HEK293T (cell line): ENCODE measurements at regions of chr10 and their contacts with region 1.

Region 1: GRCh38 chr10:60778214-60779029 is at the start of gene CDK1:
- DNase-seq: peak; percentile 95

Region 2: DNA sequence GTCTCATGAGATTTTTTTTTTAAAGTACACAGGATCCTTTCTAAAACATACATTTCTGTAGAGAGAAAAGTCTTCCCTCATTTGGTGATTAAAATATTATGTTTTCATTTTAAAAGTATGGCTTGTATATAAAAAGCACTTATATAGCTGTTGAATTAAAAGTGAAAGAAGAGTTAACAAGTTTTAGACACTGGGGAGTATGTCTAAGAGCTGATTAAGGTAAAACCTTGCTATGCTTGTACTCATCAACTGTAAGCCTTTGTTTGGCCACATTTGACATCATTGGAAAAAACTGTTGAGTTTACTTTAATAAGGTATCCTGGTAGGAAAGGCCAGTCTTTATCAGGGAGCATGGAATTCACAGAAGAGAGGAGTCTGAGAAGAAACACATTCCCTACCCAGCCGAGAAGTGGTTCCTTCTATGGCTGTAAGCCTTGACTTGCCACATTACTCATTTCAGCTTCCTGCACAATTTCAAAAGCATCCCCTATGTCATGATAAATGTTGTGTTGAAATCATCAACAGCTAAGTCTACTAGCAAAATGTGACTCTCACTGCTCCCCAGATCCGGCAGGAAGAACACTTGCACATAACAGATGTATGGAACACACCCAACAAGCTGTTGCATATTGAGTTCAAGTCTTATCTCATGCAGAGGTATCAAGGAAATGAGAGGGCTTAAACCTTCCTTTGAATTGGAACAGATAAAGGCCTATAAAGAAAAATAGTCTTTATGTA is 171.9 kb before region 1 on chr10:
- CTCF ChIA-PET with region 1: no interaction called
- POLR2A ChIA-PET with region 1: no interaction called
- DNase-seq: no peak

Region 3: GRCh38 chr10:60618861-60619260 is 159.6 kb before region 1 on chr10:
- CTCF ChIA-PET with region 1: no interaction called
- POLR2A ChIA-PET with region 1: no interaction called
- DNase-seq: no peak

Region 4: DNA sequence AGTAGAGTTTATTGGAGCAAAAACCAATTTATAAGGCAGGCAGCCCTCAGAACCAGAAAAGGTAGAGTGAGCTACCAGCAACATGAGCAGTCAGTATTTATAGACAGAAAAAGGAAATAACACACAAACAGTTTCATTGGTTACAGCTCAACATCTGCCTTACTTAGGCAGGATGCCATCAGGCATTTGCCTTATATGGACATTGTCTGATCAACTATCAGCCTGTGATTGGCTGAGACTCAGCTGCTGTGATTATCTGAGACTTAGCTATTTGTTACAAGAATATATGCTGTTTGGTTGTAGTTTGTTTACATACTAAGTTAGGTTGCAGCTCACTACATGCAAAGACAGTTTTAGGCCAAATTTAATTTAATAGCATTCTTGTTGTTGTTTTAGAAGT is 60.6 kb before region 1 on chr10:
- CTCF ChIA-PET with region 1: no interaction called
- POLR2A ChIA-PET with region 1: no interaction called
- DNase-seq: no peak

Region 5: DNA sequence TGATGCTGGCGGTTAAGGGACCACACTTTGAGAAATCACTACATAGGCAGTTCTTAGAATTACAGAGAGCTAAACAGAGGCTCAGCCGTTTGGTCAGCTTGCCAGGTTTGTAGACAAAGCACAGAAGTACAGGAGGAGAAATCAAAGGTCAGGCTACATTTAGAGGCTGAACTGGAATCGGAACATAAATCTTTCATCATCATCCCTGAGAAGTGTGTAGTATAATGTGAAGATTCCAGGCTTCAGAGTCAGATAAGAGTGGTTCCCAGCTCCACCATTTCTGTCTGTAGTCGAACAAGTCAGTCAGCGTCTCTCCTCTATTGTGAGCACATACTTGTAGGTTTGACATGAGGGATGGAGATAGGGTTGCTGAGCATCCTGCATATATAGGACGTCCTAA is 18.8 kb after region 1 on chr10:
- CTCF ChIA-PET with region 1: no interaction called
- POLR2A ChIA-PET with region 1: interaction called, 13 read pairs
- DNase-seq: no peak